Posterior vena cava (tissue), 2 donors: ENCODE measurements at regions of chr2 and their contacts with region 1.

Region 1: GRCh38 chr2:225735844-225736243 is 336.3 kb downstream of the NYAP2 start:
- DNase-seq: no peak

Region 2: GRCh38 chr2:224611938-224612337 is 1123.9 kb before region 1 on chr2:
- intact Hi-C with region 1: loop called in 1 of 2 experiments (anchors 5 kb)
- DNase-seq: no peak

Region 3: GRCh38 chr2:225637259-225637658 is 98.6 kb before region 1 on chr2:
- intact Hi-C with region 1: no loop called
- DNase-seq: no peak

Region 4: GRCh38 chr2:225765820-225766219 is 30.0 kb after region 1 on chr2:
- intact Hi-C with region 1: no loop called
- DNase-seq: no peak

Region 5: GRCh38 chr2:226403369-226403768 is 667.5 kb after region 1 on chr2:
- intact Hi-C with region 1: no loop called
- DNase-seq: no peak